ENCODE measurements at regions of chr1 and their contacts with region 1.

Region 1: GRCh38 chr1:61453111-61453961 is 271.6 kb downstream of the TM2D1 start:
- DNase-seq: peak; percentile 17
- ATAC-seq: peak; percentile 68
- H3K4me3 Mint-ChIP-seq: no peak overlapping the region
- H3K27ac Mint-ChIP-seq: no peak overlapping the region
- H3K4me1 Mint-ChIP-seq: peaks cover 4% of the 10 kb centered on the region
- H3K27me3 Mint-ChIP-seq: peaks cover 2% of the 10 kb centered on the region
- CTCF ChIP-seq: peak; percentile 16

Region 2: DNA sequence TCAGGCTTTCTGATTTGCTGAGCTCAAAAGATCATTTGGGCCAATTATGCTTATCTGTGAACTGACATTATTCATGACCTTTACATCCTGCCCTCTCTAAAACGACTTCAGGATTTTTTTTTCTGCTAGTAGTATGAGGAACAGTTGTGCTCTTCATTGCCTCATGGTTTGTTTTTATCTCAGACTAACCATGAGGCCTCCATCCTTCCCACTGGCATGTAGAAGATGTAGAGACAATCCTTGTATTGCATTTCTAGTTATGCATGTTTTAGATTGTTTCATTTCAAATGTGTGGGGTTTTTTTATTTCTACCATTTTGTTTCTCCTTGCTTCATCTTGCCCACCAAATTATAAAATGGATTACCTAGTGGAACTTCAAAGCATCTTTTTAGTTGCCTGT is 1297.0 kb before region 1 on chr1:
- CTCF ChIA-PET with region 1: no interaction called
- POLR2A ChIA-PET with region 1: no interaction called
- intact Hi-C with region 1: loop called (anchors 2 kb)
- DNase-seq: no peak
- ATAC-seq: no peak
- H3K4me3 Mint-ChIP-seq: no peak overlapping the region
- H3K27ac Mint-ChIP-seq: no peak overlapping the region
- H3K4me1 Mint-ChIP-seq: no peaks in the 10 kb centered on the region
- H3K27me3 Mint-ChIP-seq: no peaks in the 10 kb centered on the region
- CTCF ChIP-seq: no peak

Region 3: DNA sequence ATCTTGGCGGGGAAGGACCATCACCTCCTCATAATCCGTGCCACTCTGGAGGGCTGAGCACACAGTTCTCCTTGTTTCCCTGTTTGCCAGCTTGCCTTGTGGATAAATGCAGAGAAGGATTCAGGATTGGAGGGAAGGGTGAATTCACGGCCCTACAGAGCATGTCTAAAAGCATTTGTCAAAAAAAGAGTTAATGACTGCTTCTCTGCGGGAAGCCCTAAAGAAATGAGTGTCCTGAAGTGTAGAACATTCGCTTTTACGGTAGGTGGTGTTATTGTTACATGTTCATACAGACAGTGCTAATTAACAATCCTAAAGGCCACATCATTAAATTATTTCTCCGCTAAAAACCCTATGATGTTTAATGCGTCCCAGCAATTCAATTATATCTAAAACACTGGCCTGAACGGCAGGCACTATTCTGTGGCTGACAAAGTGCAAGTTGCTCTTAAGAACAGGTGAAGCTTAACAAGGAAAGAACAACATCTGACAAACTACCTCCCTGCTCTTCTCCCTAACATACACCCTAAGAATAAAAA is 483.3 kb before region 1 on chr1:
- CTCF ChIA-PET with region 1: no interaction called
- POLR2A ChIA-PET with region 1: no interaction called
- intact Hi-C with region 1: loop called (anchors 1 kb)
- DNase-seq: no peak
- ATAC-seq: no peak
- H3K4me3 Mint-ChIP-seq: no peak overlapping the region
- H3K27ac Mint-ChIP-seq: no peak overlapping the region
- H3K4me1 Mint-ChIP-seq: no peaks in the 10 kb centered on the region
- H3K27me3 Mint-ChIP-seq: peaks cover 3% of the 10 kb centered on the region
- CTCF ChIP-seq: no peak

Region 4: GRCh38 chr1:61049850-61050540 is 403.3 kb before region 1 on chr1:
- CTCF ChIA-PET with region 1: interaction called, 14 read pairs
- POLR2A ChIA-PET with region 1: no interaction called
- intact Hi-C with region 1: loop called (anchors 1 kb)
- DNase-seq: peak; percentile 82
- ATAC-seq: peak; percentile 87
- H3K4me3 Mint-ChIP-seq: peak overlapping the region; percentile 82
- H3K27ac Mint-ChIP-seq: no peak overlapping the region
- H3K4me1 Mint-ChIP-seq: peaks cover 29% of the 10 kb centered on the region
- H3K27me3 Mint-ChIP-seq: peaks cover 54% of the 10 kb centered on the region
- CTCF ChIP-seq: peak; percentile 36